Psoas muscle (tissue), 8 donors: ENCODE measurements at regions of chr6 and their contacts with region 1.

Region 1: DNA sequence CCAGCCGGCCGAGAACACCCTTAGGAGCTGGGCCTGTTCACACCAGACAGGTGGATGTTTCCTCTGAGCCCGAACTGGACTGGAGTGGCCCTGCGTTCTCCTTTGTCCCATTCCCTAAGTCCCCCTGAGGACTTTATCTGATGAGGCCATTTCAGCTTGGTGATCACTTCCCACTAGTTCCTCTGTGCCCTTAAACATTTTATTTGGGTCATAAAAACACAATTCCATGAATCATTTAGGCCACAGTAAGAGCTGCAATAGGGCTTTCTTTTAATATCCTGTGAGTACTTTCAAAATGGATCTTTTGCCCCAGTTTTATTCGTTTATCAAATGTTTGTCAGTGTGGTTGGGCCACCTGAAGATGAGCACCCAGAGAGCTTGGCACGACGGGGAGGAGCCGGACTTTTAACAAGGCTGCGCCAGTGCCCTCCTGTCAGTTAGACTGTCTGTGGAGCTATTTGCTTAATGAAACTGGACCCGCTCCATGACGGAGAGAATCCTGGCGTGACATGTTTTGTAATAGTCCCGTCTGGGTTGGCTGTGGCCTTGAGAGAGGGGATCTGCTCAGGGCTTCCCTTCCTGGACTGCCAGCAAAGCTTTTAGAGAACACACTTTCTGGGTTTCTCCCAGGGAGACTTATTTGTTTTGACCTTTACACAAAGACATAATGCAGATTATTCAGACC is 53.5 kb downstream of the ZDHHC14 start:
- DNase-seq: peak; percentile 64 to 75
- ATAC-seq: peak; percentile 55 to 73 (median 71)
- H3K4me3 ChIP-seq: no peak overlapping the region
- H3K27ac ChIP-seq: peak overlapping the region; percentile 69
- H3K4me1 ChIP-seq: peaks cover 39% of the 10 kb centered on the region
- H3K27me3 ChIP-seq: no peaks in the 10 kb centered on the region
- CTCF ChIP-seq: no peak

Region 2: DNA sequence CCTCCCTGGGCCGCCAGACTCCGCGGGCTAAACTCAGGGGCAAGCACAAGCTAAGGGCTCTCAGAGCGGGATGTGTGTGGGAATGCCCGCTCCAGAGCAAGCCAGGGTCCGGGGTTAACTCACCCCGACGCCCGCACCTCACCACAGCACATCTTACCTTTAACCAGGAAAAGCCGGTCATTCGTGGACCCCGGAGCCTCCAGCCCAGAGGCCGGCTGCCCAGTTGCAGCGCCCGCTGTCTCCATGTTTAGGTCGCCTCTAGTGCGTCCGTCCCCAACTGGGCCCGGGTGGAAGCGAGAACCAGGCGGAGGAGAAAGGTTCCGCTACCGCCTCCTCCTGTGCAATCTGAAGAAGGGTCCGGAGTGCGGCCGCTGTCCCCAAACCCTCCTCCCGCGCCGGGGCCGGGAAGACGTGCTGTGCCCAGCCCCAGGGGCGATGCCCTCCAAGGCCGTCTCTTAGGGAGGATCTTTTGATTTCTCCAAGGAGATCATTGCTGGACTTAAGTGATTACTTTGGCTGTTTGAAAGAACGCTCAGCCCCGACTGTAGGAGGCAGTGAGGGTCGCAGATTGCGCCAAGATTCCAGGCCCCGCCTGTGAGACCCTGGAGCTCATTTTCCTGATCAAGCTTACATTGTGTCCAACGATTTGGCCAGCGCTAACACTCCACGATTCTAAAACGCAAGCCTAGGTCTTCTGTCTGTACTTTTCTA is 111.1 kb before region 1 on chr6 and contains the start of gene TMEM242:
- intact Hi-C with region 1: loop called in 1 of 2 experiments (anchors 5 kb)
- DNase-seq: peak; percentile 92 to 95
- ATAC-seq: peak; percentile 92 to 96 (median 94)
- H3K4me3 ChIP-seq: peak within 1 kb of the TSS; percentile 78
- H3K27ac ChIP-seq: peak within 1 kb of the TSS; percentile 99
- H3K4me1 ChIP-seq: peaks cover 38% of the 10 kb centered on the region
- H3K27me3 ChIP-seq: no peaks in the 10 kb centered on the region
- CTCF ChIP-seq: peak; percentile 42
- total RNA-seq, gene TMEM242: 11.0 to 14.7 (median 13.6) TPM

Region 3: GRCh38 chr6:157535339-157536222 is 101.1 kb after region 1 on chr6:
- intact Hi-C with region 1: loop called in 1 of 2 experiments (anchors 5 kb)
- DNase-seq: no peak
- ATAC-seq: no peak
- H3K4me3 ChIP-seq: no peak overlapping the region
- H3K27ac ChIP-seq: peak overlapping the region; percentile 20
- H3K4me1 ChIP-seq: peaks cover 65% of the 10 kb centered on the region
- H3K27me3 ChIP-seq: no peaks in the 10 kb centered on the region
- CTCF ChIP-seq: no peak